B cell (primary cell): ENCODE measurements at regions of chr2 and their contacts with region 1.

Region 1: DNA sequence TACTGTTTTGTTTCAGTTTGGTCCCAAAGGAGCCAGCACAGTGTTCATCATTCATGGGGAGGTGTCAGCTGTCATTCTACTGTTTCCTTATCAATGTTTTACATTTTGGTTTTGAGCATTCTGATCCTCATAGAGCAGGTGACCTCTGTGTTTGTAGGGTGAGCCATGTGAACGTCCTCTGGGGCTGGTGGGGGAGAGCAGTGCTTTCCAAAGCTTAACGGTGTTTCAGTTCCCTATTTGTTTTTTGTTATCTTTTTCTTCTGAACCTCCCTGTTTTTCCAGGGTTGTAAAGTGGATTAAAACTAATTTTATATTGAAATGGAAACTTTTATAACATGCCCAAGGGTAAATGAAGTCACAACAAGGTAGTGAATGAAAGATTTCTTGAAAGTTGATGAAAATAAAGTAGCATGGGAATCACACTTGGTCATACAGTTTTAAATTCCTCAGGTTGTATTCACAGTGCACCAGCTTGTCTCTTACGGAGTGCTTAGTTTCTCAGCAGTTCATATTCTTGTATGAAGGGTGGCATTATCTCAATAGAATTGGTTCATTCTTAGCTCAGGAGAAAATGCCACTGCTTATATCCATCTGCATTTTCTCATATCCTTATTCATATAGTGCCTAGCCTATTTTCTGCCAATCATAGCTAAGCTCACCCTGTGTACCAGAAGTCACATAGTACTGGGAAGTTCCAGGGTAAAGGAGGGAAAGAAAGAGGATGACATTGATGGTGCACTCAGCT is 54.5 kb downstream of the MAP4K4 start:
- DNase-seq: peak; percentile 82
- ATAC-seq: peak; percentile 83
- H3K4me3 ChIP-seq: peak overlapping the region in 2 of 5 experiments; percentile 8 to 28
- H3K4me3 Mint-ChIP-seq: peak overlapping the region; percentile 74
- H3K27ac ChIP-seq: peak overlapping the region; percentile 68 to 85
- H3K27ac Mint-ChIP-seq: peak overlapping the region; percentile 85
- H3K4me1 ChIP-seq: peaks cover 77 to 78% of the 10 kb centered on the region in 2 donors
- H3K4me1 Mint-ChIP-seq: peaks cover 80% of the 10 kb centered on the region
- H3K27me3 ChIP-seq: no peaks in the 10 kb centered on the region
- H3K27me3 Mint-ChIP-seq: no peaks in the 10 kb centered on the region
- CTCF ChIP-seq: no peak

Region 2: DNA sequence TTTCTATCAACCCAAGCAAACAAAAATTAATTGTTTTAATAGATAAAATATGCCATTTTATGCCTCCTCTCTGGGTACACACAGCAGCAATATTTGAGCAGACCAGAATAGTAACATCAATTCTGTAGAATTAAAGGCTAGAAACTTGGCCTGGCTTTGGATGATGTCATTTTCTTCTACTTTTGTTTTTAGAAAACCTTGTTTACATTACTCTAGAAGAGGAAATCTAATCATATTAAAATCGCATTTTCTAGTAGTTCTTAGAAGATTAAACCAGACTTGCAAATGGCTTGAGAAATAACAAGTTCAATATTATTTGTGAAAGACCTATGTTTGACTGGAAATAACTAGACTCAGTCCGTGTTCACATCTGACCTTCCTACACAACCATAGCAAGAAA is 174.9 kb before region 1 on chr2:
- CTCF ChIA-PET with region 1: no interaction called
- POLR2A ChIA-PET with region 1: no interaction called
- intact Hi-C with region 1: no loop called
- DNase-seq: no peak
- ATAC-seq: no peak
- H3K4me3 ChIP-seq: no peak overlapping the region
- H3K4me3 Mint-ChIP-seq: no peak overlapping the region
- H3K27ac ChIP-seq: no peak overlapping the region
- H3K27ac Mint-ChIP-seq: no peak overlapping the region
- H3K4me1 ChIP-seq: no peaks in the 10 kb centered on the region
- H3K4me1 Mint-ChIP-seq: no peaks in the 10 kb centered on the region
- H3K27me3 ChIP-seq: no peaks in the 10 kb centered on the region
- H3K27me3 Mint-ChIP-seq: peaks cover 22% of the 10 kb centered on the region
- CTCF ChIP-seq: no peak

Region 3: GRCh38 chr2:101717071-101717845 is 34.8 kb before region 1 on chr2:
- CTCF ChIA-PET with region 1: interaction called, 7 read pairs
- POLR2A ChIA-PET with region 1: interaction called, 4 read pairs
- intact Hi-C with region 1: loop called (anchors 2 kb)
- DNase-seq: peak; percentile 93
- ATAC-seq: peak; percentile 85
- H3K4me3 ChIP-seq: peak overlapping the region in 4 of 5 experiments; percentile 5 to 52 (median 19)
- H3K4me3 Mint-ChIP-seq: peak overlapping the region; percentile 83
- H3K27ac ChIP-seq: peak overlapping the region; percentile 94 to 99
- H3K27ac Mint-ChIP-seq: peak overlapping the region; percentile 96
- H3K4me1 ChIP-seq: peaks cover 92 to 93% of the 10 kb centered on the region in 2 donors
- H3K4me1 Mint-ChIP-seq: peaks cover 83% of the 10 kb centered on the region
- H3K27me3 ChIP-seq: no peaks in the 10 kb centered on the region
- H3K27me3 Mint-ChIP-seq: no peaks in the 10 kb centered on the region
- CTCF ChIP-seq: no peak

Region 4: GRCh38 chr2:101732199-101732598 is 19.8 kb before region 1 on chr2:
- CTCF ChIA-PET with region 1: interaction called, 3 read pairs
- POLR2A ChIA-PET with region 1: interaction called, 10 read pairs
- intact Hi-C with region 1: no loop called
- DNase-seq: no peak
- ATAC-seq: no peak
- H3K4me3 ChIP-seq: no peak overlapping the region
- H3K4me3 Mint-ChIP-seq: no peak overlapping the region
- H3K27ac ChIP-seq: peak overlapping the region in 1 of 2 donors; percentile 48
- H3K27ac Mint-ChIP-seq: no peak overlapping the region
- H3K4me1 ChIP-seq: peaks cover 91 to 93% of the 10 kb centered on the region in 2 donors
- H3K4me1 Mint-ChIP-seq: peaks cover 91% of the 10 kb centered on the region
- H3K27me3 ChIP-seq: no peaks in the 10 kb centered on the region
- H3K27me3 Mint-ChIP-seq: no peaks in the 10 kb centered on the region
- CTCF ChIP-seq: no peak

Region 5: DNA sequence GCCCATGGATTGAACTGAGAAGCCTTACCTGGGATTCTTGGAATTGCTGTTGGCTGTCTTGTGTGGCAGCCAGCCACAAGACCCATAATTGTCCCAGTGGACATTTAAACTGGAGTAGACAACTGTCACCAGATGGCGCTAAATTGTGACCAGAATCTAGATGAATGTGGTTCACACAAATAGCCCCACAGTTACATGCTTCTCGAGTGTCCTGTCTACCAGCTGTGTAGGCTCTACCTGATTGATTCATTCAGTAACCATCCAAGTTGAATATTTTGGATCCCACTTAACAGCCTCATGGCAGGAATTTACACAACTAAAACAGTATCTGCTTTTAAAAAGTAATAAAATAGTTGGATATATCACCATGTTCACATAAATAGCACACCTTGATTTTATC is 18.7 kb after region 1 on chr2:
- CTCF ChIA-PET with region 1: interaction called, 12 read pairs
- POLR2A ChIA-PET with region 1: interaction called, 3 read pairs
- intact Hi-C with region 1: loop called (anchors 2 kb)
- DNase-seq: peak; percentile 59
- ATAC-seq: no peak
- H3K4me3 ChIP-seq: no peak overlapping the region
- H3K4me3 Mint-ChIP-seq: peak overlapping the region; percentile 30
- H3K27ac ChIP-seq: no peak overlapping the region
- H3K27ac Mint-ChIP-seq: peak overlapping the region; percentile 73
- H3K4me1 ChIP-seq: peaks cover 70 to 82% of the 10 kb centered on the region in 2 donors
- H3K4me1 Mint-ChIP-seq: peaks cover 91% of the 10 kb centered on the region
- H3K27me3 ChIP-seq: no peaks in the 10 kb centered on the region
- H3K27me3 Mint-ChIP-seq: no peaks in the 10 kb centered on the region
- CTCF ChIP-seq: peak; percentile 60

Region 6: GRCh38 chr2:101776172-101777043 is 24.4 kb after region 1 on chr2:
- CTCF ChIA-PET with region 1: interaction called, 3 read pairs
- POLR2A ChIA-PET with region 1: interaction called, 3 read pairs
- intact Hi-C with region 1: loop called (anchors 1 kb)
- DNase-seq: no peak
- ATAC-seq: no peak
- H3K4me3 ChIP-seq: no peak overlapping the region
- H3K4me3 Mint-ChIP-seq: no peak overlapping the region
- H3K27ac ChIP-seq: no peak overlapping the region
- H3K27ac Mint-ChIP-seq: no peak overlapping the region
- H3K4me1 ChIP-seq: peaks cover 79 to 87% of the 10 kb centered on the region in 2 donors
- H3K4me1 Mint-ChIP-seq: peaks cover 91% of the 10 kb centered on the region
- H3K27me3 ChIP-seq: no peaks in the 10 kb centered on the region
- H3K27me3 Mint-ChIP-seq: no peaks in the 10 kb centered on the region
- CTCF ChIP-seq: no peak

Region 7: GRCh38 chr2:101806123-101806522 is 54.1 kb after region 1 on chr2:
- CTCF ChIA-PET with region 1: interaction called, 3 read pairs
- POLR2A ChIA-PET with region 1: no interaction called
- intact Hi-C with region 1: loop called (anchors 5 kb)
- DNase-seq: peak; percentile 58
- ATAC-seq: peak; percentile 91
- H3K4me3 ChIP-seq: no peak overlapping the region
- H3K4me3 Mint-ChIP-seq: peak overlapping the region; percentile 32
- H3K27ac ChIP-seq: peak overlapping the region in 1 of 2 donors; percentile 63
- H3K27ac Mint-ChIP-seq: peak overlapping the region; percentile 27
- H3K4me1 ChIP-seq: peaks cover 44 to 46% of the 10 kb centered on the region in 2 donors
- H3K4me1 Mint-ChIP-seq: peaks cover 79% of the 10 kb centered on the region
- H3K27me3 ChIP-seq: no peaks in the 10 kb centered on the region
- H3K27me3 Mint-ChIP-seq: no peaks in the 10 kb centered on the region
- CTCF ChIP-seq: no peak

Region 8: DNA sequence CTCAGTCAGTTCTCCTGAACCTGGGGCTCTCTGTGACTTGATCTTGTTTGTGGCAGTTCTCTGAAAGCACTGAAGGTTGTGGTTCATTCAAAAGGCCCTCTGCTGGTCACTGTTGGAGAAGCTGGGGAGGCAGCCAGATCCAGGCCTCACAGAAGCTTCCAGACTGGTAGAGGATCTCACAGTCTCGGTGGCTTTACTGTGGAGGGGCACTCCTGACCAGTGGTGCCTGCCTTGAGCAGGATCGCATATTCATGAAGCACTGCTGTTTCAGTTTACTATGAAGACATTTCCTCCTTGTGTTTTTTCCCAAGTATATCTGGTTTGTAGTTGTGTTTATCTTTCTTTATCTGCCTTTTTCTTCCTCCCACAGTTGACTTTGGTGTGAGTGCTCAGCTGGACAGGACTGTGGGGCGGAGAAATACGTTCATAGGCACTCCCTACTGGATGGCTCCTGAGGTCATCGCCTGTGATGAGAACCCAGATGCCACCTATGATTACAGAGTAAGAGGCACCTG is 79.4 kb after region 1 on chr2:
- CTCF ChIA-PET with region 1: interaction called, 12 read pairs
- POLR2A ChIA-PET with region 1: no interaction called
- intact Hi-C with region 1: no loop called
- DNase-seq: peak; percentile 75
- ATAC-seq: peak; percentile 86
- H3K4me3 ChIP-seq: no peak overlapping the region
- H3K4me3 Mint-ChIP-seq: no peak overlapping the region
- H3K27ac ChIP-seq: no peak overlapping the region
- H3K27ac Mint-ChIP-seq: peak overlapping the region; percentile 33
- H3K4me1 ChIP-seq: peaks cover 18 to 26% of the 10 kb centered on the region in 2 donors
- H3K4me1 Mint-ChIP-seq: peaks cover 52% of the 10 kb centered on the region
- H3K27me3 ChIP-seq: no peaks in the 10 kb centered on the region
- H3K27me3 Mint-ChIP-seq: no peaks in the 10 kb centered on the region
- CTCF ChIP-seq: peak; percentile 73